Common myeloid progenitor, CD34-positive (primary cell): ENCODE measurements at regions of chr12 and their contacts with region 1.

Region 1: DNA sequence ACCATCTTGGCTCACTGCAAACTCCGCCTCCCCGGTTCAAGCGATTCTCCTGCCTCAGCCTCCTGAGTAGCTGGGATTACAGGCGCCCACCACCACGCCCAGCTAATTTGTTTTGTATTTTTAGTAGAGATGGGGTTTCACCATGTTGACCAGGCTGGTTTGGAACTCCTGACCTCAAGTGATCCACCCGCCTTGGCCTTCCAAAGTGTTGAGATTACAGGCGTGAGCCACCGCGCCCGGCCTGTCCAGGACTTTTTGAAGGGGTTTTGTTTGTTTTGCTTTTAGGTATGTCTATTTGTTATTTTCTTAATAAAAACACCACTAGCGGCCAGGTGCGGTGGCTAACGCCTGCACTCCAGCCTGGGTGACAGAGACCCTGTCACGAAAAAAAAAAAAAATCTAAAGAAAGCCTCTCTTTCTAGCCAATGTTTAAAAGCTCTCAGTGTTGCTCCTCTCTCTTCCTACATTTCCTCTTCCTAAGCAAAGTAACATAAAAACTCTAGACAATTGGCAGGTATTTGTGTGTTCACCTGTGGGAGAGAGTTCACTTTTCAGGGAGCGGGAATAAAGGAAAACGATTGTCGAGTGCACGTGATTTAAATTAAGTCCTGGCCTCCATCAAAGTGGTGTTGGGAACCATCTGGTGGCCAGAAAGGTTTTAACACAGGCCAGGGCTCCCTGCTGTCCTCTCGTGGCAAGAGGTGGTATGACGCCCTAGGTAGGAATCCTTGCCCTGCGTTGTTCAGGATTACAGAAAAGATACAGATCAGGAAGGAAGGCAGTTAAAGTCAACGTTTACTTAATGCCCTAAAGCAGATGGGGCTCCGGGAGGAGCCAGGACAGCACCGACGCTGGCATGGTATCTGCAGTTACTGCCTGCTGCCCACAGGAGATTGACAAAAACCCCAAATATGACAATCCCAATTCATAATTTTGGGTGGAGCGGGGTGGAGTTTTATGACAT is 36.2 kb upstream of the ATP23 start:
- DNase-seq: peak; percentile 85 to 90 (median 86)
- H3K4me3 ChIP-seq: peak overlapping the region in 3 of 7 experiments; percentile 12 to 60 (median 20)
- H3K27ac ChIP-seq: no peak overlapping the region
- H3K4me1 ChIP-seq: peaks cover 2 to 8% (median 7%) of the 10 kb centered on the region in 4 experiments
- H3K27me3 ChIP-seq: no peaks in the 10 kb centered on the region

Region 2: GRCh38 chr12:57815177-57816000 is 89.7 kb before region 1 on chr12:
- CTCF ChIA-PET with region 1: interaction called, 14 read pairs
- POLR2A ChIA-PET with region 1: no interaction called
- DNase-seq: no peak
- H3K4me3 ChIP-seq: no peak overlapping the region
- H3K27ac ChIP-seq: no peak overlapping the region
- H3K4me1 ChIP-seq: peaks cover 0 to 10% (median 3%) of the 10 kb centered on the region in 4 experiments
- H3K27me3 ChIP-seq: no peaks in the 10 kb centered on the region

Region 3: GRCh38 chr12:57829025-57829777 is 75.9 kb before region 1 on chr12:
- CTCF ChIA-PET with region 1: interaction called, 313 read pairs
- POLR2A ChIA-PET with region 1: no interaction called
- DNase-seq: no peak
- H3K4me3 ChIP-seq: no peak overlapping the region
- H3K27ac ChIP-seq: no peak overlapping the region
- H3K4me1 ChIP-seq: peaks cover 9 to 47% (median 45%) of the 10 kb centered on the region in 4 experiments
- H3K27me3 ChIP-seq: no peaks in the 10 kb centered on the region

Region 4: GRCh38 chr12:57852620-57853500 is 52.3 kb before region 1 on chr12:
- CTCF ChIA-PET with region 1: interaction called, 29 read pairs
- POLR2A ChIA-PET with region 1: no interaction called
- DNase-seq: peak in 1 of 3 donors; percentile 45
- H3K4me3 ChIP-seq: peak overlapping the region; percentile 20 to 76 (median 48)
- H3K27ac ChIP-seq: no peak overlapping the region
- H3K4me1 ChIP-seq: peaks cover 7 to 43% (median 36%) of the 10 kb centered on the region in 4 experiments
- H3K27me3 ChIP-seq: no peaks in the 10 kb centered on the region

Region 5: DNA sequence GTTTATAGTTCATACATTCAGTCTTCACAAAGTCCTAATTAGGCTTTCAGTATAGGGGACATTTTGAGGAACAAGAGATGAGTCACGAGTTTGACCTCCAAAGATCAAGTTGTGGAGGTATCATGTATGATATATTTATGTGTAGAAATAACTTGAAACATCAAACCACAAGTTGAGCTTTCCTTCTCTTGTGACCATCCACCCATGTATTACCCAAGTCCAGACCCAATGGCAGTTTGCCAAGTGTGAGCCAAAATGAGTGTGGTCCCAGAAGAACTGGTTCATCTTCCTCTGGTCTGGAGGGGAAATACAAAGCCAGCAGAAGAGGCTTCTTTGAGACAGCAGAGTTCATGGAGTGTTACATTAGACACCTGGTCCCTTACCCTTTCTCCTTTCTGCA is 141.1 kb after region 1 on chr12:
- CTCF ChIA-PET with region 1: no interaction called
- POLR2A ChIA-PET with region 1: no interaction called
- DNase-seq: no peak
- H3K4me3 ChIP-seq: no peak overlapping the region
- H3K27ac ChIP-seq: no peak overlapping the region
- H3K4me1 ChIP-seq: no peaks in the 10 kb centered on the region
- H3K27me3 ChIP-seq: no peaks in the 10 kb centered on the region